ENCODE measurements at regions of chr2 and their contacts with region 1.

Region 1: DNA sequence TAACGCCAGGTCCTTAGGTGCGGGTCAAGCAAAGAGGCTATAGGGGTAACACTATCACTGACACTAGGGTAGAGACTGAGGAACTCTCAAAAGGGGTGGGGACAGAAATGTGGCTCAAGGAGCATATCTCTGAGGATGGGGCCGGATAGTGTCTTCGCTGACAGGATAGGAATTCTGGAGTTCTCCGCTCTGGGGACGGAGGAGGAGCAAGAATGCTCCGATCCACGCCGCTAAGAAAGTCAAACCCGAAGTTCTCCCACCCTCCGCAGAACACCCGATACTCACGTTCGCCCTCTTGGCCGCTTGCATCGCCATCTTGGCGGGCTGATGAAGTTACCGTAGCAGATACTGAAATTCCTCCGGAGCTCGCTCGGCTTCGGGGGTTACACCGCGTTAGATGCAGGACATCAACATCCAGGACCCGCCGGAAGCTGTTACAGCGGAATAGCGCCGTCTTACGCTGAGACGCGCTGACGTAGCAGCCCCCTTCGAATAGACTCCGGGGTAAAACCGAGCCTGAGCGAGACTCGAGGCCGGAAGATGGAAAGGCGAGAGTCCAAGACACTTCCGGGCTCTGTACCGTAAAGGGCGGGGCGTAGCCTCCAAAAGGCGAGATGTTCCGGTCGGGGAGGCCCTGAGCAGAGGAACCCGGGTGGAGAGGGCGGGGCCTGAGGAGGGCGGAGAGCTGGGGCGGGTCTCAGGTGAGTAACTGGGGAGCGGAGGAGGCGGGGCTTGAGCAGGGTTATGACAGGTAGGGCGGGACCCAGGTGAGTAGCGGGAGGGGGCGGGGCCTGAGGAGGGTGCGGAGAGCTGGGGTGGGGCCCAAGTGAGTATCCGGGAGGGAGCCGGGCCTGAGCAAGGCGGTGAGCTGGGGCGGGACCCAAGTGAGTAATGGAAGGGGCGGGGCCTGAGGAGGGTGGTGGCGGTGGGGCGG is at the start of gene SF3B6:
- DNase-seq: peak; percentile 99 to 100
- H3K4me3 ChIP-seq: peak within 1 kb of the TSS; percentile 89
- H3K27ac ChIP-seq: peak within 1 kb of the TSS; percentile 85
- H3K4me1 ChIP-seq: peaks cover 21% of the 10 kb centered on the region
- H3K27me3 ChIP-seq: no peaks in the 10 kb centered on the region
- CTCF ChIP-seq: no peak
- total RNA-seq, gene SF3B6: 106 and 123 TPM in 2 replicates

Region 2: DNA sequence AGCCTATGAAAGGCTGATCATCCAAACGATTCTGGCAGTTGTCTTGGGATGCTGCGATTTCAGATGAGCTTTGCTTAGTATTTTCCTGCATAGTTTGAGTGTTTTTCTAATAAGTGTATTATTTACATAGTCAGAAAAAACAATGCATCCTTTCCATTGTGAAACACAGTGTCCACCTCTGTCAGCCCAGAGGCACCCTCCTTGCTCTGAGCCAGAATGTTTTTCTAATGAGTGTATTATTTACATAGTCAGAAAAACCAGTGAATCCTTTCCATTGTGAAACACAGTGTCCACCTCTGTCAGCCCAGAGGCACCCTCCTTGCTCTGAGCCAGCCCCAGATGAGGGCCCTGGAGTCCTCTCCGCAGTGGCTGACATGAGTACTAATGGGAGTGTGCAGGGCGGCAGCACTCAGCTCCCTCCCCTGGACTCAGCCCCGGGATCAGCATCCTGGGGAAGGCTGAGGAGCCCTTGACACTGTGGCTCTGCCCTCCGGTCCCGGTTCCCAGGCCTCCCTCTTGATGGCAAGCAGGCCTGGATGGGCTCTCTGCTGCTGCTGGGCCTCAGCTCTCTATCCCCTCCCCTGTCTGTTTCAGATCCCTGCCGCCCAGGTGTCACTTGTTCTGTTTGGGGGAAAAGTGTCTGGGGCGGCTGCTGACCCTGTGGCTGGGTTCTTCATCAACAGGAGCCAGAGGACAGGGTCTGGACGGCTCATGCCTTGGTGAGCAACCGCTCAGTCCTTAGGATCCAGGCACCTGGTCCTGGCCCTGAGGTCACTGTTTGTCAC is 60.4 kb before region 1 on chr2:
- CTCF ChIA-PET with region 1: no interaction called
- POLR2A ChIA-PET with region 1: interaction called, 6 read pairs
- intact Hi-C with region 1: loop called (anchors 1 kb)
- DNase-seq: peak; percentile 84 to 99
- H3K4me3 ChIP-seq: no peak overlapping the region
- H3K27ac ChIP-seq: peak overlapping the region; percentile 55
- H3K4me1 ChIP-seq: peaks cover 45% of the 10 kb centered on the region
- H3K27me3 ChIP-seq: no peaks in the 10 kb centered on the region
- CTCF ChIP-seq: no peak

Region 3: GRCh38 chr2:24111407-24111901 is 35.3 kb after region 1 on chr2:
- CTCF ChIA-PET with region 1: interaction called, 3 read pairs
- POLR2A ChIA-PET with region 1: interaction called, 60 read pairs
- intact Hi-C with region 1: loop called (anchors 1 kb)
- DNase-seq: peak; percentile 49 to 87
- H3K4me3 ChIP-seq: no peak overlapping the region
- H3K27ac ChIP-seq: peak overlapping the region; percentile 92
- H3K4me1 ChIP-seq: peaks cover 45% of the 10 kb centered on the region
- H3K27me3 ChIP-seq: no peaks in the 10 kb centered on the region
- CTCF ChIP-seq: no peak

Region 4: DNA sequence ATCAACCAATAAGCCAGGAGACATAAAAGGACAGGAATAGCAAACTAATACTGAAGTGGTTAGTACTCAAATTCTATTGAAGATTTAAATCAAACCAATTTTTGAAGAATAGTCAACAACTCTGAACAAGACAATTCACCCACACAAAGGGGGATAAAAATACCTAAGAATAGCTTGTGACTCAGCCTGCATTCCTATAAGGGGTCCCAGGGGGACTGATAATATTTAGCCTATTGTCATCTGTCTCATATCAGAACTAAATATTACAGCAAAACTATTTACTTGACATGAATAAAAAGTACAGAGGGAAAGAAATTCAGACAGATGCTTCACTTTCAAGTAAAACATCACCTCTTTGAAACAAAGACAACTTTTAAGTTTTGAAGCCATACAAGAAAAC is 276.5 kb after region 1 on chr2:
- CTCF ChIA-PET with region 1: no interaction called
- POLR2A ChIA-PET with region 1: interaction called, 12 read pairs
- intact Hi-C with region 1: no loop called
- DNase-seq: no peak
- H3K4me3 ChIP-seq: no peak overlapping the region
- H3K27ac ChIP-seq: no peak overlapping the region
- H3K4me1 ChIP-seq: no peaks in the 10 kb centered on the region; the same call in 1 of the 2 replicates
- H3K27me3 ChIP-seq: no peaks in the 10 kb centered on the region
- CTCF ChIP-seq: no peak

Measured in PC-9 (cell line).